Posterior cingulate gyrus (tissue), 11 donors: ENCODE measurements at regions of chr7 and their contacts with region 1.

Region 1: GRCh38 chr7:26490650-26491624 is 199.3 kb downstream of the SNX10 start:
- DNase-seq: peak in 6 of 10 donors; percentile 18 to 86 (median 30)

Region 2: DNA sequence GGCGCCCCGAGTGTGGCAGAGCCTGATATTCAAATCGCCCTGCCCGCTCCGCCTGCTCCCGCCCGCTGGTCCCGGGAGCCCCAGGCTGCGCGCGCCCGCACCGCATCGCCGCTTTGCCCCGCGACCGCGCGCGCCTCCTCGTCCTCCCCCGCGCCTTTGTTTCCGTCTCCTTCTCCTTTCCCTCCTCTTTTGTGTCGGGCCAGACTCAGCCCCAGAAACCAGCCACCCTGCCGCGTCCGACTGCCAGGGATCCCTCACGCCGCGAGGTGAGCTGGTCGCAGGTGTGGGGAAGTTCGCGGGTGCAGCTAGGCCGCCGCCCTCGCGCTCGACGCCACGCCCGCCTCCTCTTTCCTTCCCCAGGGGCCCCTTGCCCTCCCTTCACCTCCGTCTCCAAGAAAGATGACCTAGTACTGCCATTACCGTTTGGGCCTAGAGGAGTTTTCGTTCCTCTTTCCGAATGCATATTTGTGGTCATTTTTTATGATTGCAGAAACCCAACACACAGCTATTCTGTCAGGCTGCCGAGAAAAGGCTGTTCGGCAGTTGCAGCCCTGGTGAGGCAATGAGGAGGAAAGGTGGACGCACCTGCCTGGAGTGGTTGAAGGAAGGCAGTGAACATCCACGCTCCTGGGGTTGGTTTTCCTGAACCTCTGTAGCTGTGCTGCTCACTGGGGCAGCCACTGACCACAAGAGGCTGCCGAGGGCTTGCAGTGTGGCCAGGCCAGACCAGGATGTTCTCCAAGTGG is 92.0 kb before region 1 on chr7:
- intact Hi-C with region 1: loop called (anchors 10 kb)
- DNase-seq: peak; percentile 25 to 92 (median 48)

Region 3: GRCh38 chr7:26603631-26604030 is 112.7 kb after region 1 on chr7:
- intact Hi-C with region 1: no loop called
- DNase-seq: no peak